T-cell (primary cell): ENCODE measurements at regions of chr5 and their contacts with region 1.

Region 1: GRCh38 chr5:95858661-95859326 is 36.3 kb upstream of the GLRX start:
- DNase-seq: peak; percentile 71 to 92 (median 86)
- ATAC-seq: peak; percentile 92 to 97 (median 94)
- H3K4me3 ChIP-seq: peak overlapping the region; percentile 16 to 26
- H3K4me3 Mint-ChIP-seq: peak overlapping the region in 2 of 3 donors; percentile 36 to 59
- H3K27ac ChIP-seq: no peak overlapping the region
- H3K27ac Mint-ChIP-seq: peak overlapping the region; percentile 60 to 64
- H3K4me1 ChIP-seq: peaks cover 6 to 12% of the 10 kb centered on the region in 2 experiments
- H3K4me1 Mint-ChIP-seq: peaks cover 28 to 46% (median 41%) of the 10 kb centered on the region in 3 donors
- H3K27me3 ChIP-seq: peaks cover 0 to 11% of the 10 kb centered on the region in 2 experiments
- H3K27me3 Mint-ChIP-seq: peaks cover 9 to 15% of the 10 kb centered on the region in 2 donors

Region 2: GRCh38 chr5:95870105-95870672 is 11.4 kb after region 1 on chr5:
- CTCF ChIA-PET with region 1: interaction called, 3 to 22 read pairs
- POLR2A ChIA-PET with region 1: no interaction called
- DNase-seq: no peak
- ATAC-seq: no peak
- H3K4me3 ChIP-seq: no peak overlapping the region
- H3K4me3 Mint-ChIP-seq: peak overlapping the region in 1 of 3 donors; percentile 62
- H3K27ac ChIP-seq: no peak overlapping the region
- H3K27ac Mint-ChIP-seq: peak overlapping the region in 1 of 2 donors; percentile 72
- H3K4me1 ChIP-seq: peaks cover 21 to 22% of the 10 kb centered on the region in 2 experiments
- H3K4me1 Mint-ChIP-seq: peaks cover 32 to 37% (median 32%) of the 10 kb centered on the region in 3 donors
- H3K27me3 ChIP-seq: no peaks in the 10 kb centered on the region
- H3K27me3 Mint-ChIP-seq: no peaks in the 10 kb centered on the region